OCI-LY7 (cell line): ENCODE measurements at regions of chr6 and their contacts with region 1.

Region 1: GRCh38 chr6:24520929-24521546 is 26.3 kb downstream of the ALDH5A1 start:
- DNase-seq: peak; percentile 80
- H3K4me3 ChIP-seq: peak overlapping the region; percentile 20
- H3K27ac ChIP-seq: peak overlapping the region; percentile 98
- H3K4me1 ChIP-seq: peaks cover 79% of the 10 kb centered on the region
- CTCF ChIP-seq: peak; percentile 95

Region 2: DNA sequence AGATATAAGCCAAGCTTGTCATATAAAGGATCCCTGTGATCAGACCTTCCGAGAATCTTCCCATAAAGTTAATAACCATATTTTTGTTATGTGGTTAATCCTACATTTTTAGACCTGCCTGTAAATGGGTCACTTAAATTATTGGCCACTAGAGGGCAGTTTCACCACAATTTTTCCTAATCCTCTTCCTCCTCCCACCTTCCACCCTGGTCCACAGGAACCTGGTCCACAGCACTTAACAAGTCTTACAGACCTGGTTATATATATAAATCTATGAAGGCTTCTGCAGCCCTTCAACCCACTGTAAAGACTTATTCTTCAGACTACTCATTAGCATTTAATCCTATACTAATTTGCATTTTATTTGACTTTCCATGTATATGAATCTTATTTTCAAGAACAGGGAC is 90.0 kb before region 1 on chr6:
- CTCF ChIA-PET with region 1: interaction called, 3 read pairs
- POLR2A ChIA-PET with region 1: interaction called, 3 read pairs
- intact Hi-C with region 1: loop called (anchors 5 kb)
- DNase-seq: peak; percentile 58
- H3K4me3 ChIP-seq: no peak overlapping the region
- H3K27ac ChIP-seq: no peak overlapping the region
- H3K4me1 ChIP-seq: no peaks in the 10 kb centered on the region
- CTCF ChIP-seq: peak; percentile 95

Region 3: DNA sequence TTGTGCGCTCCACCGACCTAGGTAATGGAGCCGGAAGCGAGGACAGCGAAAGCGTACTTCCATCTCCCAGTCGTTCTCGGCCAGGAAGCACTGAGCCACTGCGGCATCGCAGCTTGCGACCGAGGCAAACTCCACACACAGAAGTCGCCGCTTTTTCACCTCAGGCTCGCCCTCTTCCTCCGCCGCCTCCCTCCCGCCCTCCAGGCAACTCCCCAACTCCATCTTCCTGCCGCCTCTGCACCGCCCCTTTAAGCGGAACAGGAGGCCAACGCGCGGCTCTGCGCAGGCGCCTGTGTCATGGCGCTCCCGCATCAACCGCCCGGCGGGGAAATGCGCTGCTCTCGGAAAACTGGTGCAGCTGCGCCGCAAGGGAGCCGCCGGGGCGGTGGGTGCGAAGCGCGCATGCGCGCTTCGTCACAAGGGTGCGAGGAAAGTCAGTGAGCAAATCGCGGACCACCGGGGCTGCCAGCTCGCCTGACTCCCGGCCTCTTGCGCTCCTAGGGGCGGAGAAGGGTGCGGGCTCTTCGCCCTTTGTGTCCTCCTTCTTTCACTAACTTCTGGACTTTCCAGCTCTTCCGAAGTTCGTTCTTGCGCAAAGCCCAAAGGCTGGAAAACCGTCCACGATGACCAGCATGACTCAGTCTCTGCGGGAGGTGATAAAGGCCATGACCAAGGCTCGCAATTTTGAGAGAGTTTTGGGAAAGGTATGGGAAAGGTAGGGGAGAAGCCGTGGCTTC is 145.8 kb after region 1 on chr6 and contains the starts of genes ACOT13 and TDP2:
- CTCF ChIA-PET with region 1: no interaction called
- POLR2A ChIA-PET with region 1: interaction called, 3 read pairs
- intact Hi-C with region 1: loop called (anchors 2 kb)
- DNase-seq: peak; percentile 98
- H3K4me3 ChIP-seq: peak within 1 kb of the TSS; percentile 98
- H3K27ac ChIP-seq: peak within 1 kb of the TSS; percentile 82
- H3K4me1 ChIP-seq: peaks cover 25% of the 10 kb centered on the region
- CTCF ChIP-seq: peak; percentile 70
- total RNA-seq, gene ACOT13: 4.1 and 6.7 TPM in 2 replicates
- total RNA-seq, gene TDP2: 22.5 and 27.2 TPM in 2 replicates

Region 4: GRCh38 chr6:24689964-24690363 is 168.9 kb after region 1 on chr6:
- CTCF ChIA-PET with region 1: no interaction called
- POLR2A ChIA-PET with region 1: no interaction called
- intact Hi-C with region 1: loop called (anchors 1 kb)
- DNase-seq: no peak
- H3K4me3 ChIP-seq: no peak overlapping the region
- H3K27ac ChIP-seq: no peak overlapping the region
- H3K4me1 ChIP-seq: peaks cover 7% of the 10 kb centered on the region
- CTCF ChIP-seq: no peak

Region 5: DNA sequence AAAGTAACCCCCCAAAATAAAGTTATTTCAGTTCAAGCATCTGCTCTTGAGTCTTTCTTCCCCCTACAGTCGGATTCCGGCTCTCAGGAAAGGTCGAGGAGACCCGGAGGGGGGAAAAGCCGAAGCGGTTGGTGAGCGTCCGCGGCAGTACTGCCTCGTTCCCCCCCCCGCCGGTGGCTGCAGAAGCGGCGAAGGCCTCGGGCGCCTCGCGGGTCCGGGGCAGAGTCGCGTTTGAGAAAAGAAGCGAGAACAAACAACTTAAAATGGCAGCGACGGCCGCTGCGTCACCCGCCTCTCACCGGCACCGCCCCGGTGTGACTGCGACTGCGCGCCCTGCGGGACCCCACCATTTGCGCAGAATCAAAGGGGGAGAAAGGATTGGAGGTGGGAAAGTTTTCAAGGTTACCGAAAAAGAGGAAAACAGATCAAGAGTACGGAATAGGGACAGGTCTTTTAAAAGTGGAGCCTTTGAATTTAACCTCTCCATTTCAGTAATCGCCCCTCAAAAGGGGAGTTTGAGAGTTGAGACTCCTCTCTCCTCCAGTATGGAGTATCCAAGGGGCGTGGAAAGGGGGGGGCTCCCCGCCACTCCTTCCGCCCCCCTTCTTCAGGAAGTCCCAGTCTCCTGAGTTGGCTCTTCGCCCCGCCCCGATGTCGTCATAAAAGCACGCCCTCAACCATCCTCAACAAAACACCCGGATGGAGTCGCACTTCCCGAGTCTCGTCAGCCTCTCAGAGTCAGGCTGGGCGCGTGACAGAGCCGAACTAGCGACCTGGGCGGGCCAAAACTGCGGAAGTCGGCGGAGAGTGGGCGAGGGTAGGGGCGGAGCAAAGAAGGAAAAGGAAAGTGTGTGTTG is 199.8 kb after region 1 on chr6:
- CTCF ChIA-PET with region 1: no interaction called
- POLR2A ChIA-PET with region 1: interaction called, 11 read pairs
- intact Hi-C with region 1: no loop called
- DNase-seq: peak; percentile 100
- H3K4me3 ChIP-seq: peak overlapping the region; percentile 86
- H3K27ac ChIP-seq: peak overlapping the region; percentile 84
- H3K4me1 ChIP-seq: peaks cover 31% of the 10 kb centered on the region
- CTCF ChIP-seq: no peak

Region 6: DNA sequence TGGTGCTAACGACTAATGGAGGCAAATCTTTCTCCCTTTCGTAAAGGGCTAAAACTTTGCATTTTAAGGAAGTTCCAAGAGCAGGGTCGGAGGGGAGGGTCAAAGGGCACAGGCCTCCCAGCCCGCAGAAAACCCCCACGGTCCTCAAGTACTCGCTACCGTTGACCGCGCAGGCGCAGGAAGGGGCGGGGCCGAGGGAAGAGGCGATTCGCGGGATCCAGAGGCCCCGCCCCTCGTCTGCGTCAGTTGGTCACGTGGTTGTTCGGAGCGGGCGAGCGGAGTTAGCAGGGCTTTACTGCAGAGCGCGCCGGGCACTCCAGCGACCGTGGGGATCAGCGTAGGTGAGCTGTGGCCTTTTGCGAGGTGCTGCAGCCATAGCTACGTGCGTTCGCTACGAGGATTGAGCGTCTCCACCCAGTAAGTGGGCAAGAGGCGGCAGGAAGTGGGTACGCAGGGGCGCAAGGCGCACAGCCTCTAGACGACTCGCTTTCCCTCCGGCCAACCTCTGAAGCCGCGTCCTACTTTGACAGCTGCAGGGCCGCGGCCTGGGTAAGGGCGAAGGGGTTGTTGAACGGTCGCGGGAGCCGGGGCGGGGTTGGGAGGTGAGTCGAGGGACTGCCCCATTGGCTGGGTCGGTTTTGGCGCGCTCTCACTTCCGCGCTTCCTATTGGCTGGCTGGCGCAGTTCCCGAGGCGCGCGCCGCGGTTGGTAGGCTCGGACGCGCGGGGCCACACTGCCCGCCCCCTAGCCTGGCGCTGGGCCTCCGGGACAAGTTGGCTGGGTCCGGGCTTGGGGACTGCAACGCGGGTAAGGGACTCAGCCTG is 253.9 kb after region 1 on chr6 and contains the start of gene GMNN:
- CTCF ChIA-PET with region 1: no interaction called
- POLR2A ChIA-PET with region 1: interaction called, 3 read pairs
- intact Hi-C with region 1: loop called (anchors 5 kb)
- DNase-seq: peak; percentile 98
- H3K4me3 ChIP-seq: peak within 1 kb of the TSS; percentile 95
- H3K27ac ChIP-seq: peak within 1 kb of the TSS; percentile 94
- H3K4me1 ChIP-seq: peaks cover 36% of the 10 kb centered on the region
- CTCF ChIP-seq: no peak
- total RNA-seq, gene GMNN: 101 and 130 TPM in 2 replicates

Region 7: DNA sequence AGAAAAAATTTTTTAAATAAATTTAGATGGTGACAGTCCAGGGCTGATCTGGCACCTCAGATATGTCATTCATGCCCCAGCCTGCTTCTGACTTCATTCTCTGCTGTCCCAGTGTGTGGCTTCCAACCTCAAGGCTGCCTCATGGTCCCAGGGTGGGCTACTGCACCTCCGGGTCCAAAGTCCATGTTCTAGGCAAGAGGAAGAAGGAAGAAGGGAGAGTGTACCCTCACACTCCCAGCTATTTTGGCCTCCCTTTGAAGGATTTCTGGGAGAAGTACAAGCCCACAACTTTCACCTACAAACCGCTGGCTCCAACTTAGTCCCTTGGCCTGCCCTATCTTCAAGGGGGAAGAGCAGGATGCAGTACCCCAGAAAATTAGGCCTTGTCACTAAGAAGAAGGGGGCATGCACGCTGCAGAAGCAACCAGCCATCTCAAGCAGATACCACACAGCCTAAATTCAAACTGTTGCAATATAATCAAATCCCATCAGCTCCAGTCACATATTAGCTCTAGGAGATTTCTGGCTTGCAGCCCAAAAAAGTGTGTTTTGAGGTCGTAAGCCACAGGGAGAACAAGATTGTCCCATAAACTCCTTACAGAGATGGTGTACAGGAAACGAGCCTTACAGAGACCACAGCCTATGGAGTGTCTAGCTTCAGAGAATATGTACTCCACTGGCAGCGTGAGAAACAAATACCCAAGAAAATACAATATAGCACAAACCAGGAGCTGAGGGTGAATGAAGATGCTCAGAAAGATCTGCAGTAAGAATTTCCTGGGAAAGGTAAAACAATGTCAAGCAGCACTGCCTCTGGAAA is 1843.1 kb after region 1 on chr6:
- CTCF ChIA-PET with region 1: no interaction called
- POLR2A ChIA-PET with region 1: no interaction called
- intact Hi-C with region 1: loop called (anchors 10 kb)
- DNase-seq: peak; percentile 52
- H3K4me3 ChIP-seq: peak overlapping the region; percentile 77
- H3K27ac ChIP-seq: peak overlapping the region; percentile 96
- H3K4me1 ChIP-seq: peaks cover 70% of the 10 kb centered on the region
- CTCF ChIP-seq: no peak